ENCODE measurements at regions of chr10 and their contacts with region 1.

Region 1: DNA sequence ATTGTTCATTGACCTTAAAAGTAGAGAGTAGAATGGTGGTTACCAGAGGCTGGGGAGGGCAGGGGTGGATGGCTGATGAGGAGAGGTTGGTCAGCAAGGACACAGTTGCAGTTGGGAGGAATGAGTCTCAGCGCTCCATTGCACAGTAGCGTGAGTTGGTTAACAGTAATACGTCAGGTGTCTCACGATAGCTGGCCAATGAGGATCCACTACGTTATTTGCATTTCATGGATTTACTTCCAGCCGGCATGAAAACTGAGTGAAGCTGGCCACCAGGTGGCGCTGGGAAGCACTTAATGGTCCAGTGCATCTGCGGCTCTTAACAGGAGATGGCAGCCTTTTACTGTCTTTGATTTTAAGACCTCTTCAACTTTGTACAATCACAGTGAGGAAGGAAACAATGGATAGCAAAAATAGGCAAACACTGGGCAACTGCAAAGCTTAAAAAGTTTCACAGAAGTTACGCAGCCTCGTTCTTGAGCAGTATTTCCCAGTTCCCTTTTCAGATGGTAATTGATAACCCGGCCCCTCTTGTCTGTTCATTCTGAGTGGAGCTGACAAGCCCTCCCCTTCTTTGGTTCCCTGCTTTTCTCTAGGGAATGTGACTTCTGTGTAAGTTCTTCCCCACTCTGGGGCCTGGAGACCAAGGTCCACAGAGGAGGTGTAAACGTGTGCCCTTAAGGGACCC is 23.7 kb downstream of the AKR1E2 start:
- DNase-seq: peak; percentile 93 to 96 (median 96)
- ATAC-seq: peak; percentile 86
- H3K4me3 ChIP-seq: no peak overlapping the region
- H3K27ac ChIP-seq: peak overlapping the region in 3 of 4 donors; percentile 33 to 85 (median 44)
- H3K4me1 ChIP-seq: peaks cover 41% of the 10 kb centered on the region
- H3K27me3 ChIP-seq: no peaks in the 10 kb centered on the region
- CTCF ChIP-seq: peak; percentile 92 to 100 (median 100)
- POLR2A ChIP-seq: peak in 2 of 3 donors; percentile 14 to 30

Region 2: GRCh38 chr10:4656576-4657182 is 193.0 kb before region 1 on chr10:
- intact Hi-C with region 1: no loop called
- DNase-seq: peak; percentile 45 to 59 (median 53)
- ATAC-seq: peak; percentile 62
- H3K4me3 ChIP-seq: no peak overlapping the region
- H3K27ac ChIP-seq: no peak overlapping the region
- H3K4me1 ChIP-seq: peaks cover 3% of the 10 kb centered on the region
- H3K27me3 ChIP-seq: no peaks in the 10 kb centered on the region
- CTCF ChIP-seq: peak; percentile 72 to 88 (median 80)
- POLR2A ChIP-seq: no peak

Region 3: GRCh38 chr10:5284311-5285057 is 434.8 kb after region 1 on chr10:
- intact Hi-C with region 1: loop called (anchors 5 kb)
- DNase-seq: peak in 1 of 4 donors; percentile 41
- ATAC-seq: no peak
- H3K4me3 ChIP-seq: no peak overlapping the region
- H3K27ac ChIP-seq: no peak overlapping the region
- H3K4me1 ChIP-seq: no peaks in the 10 kb centered on the region
- H3K27me3 ChIP-seq: no peaks in the 10 kb centered on the region
- CTCF ChIP-seq: no peak
- POLR2A ChIP-seq: no peak

Measured in body of pancreas (tissue), 4 donors.